ENCODE measurements at regions of chr3 and their contacts with region 1.

Region 1: DNA sequence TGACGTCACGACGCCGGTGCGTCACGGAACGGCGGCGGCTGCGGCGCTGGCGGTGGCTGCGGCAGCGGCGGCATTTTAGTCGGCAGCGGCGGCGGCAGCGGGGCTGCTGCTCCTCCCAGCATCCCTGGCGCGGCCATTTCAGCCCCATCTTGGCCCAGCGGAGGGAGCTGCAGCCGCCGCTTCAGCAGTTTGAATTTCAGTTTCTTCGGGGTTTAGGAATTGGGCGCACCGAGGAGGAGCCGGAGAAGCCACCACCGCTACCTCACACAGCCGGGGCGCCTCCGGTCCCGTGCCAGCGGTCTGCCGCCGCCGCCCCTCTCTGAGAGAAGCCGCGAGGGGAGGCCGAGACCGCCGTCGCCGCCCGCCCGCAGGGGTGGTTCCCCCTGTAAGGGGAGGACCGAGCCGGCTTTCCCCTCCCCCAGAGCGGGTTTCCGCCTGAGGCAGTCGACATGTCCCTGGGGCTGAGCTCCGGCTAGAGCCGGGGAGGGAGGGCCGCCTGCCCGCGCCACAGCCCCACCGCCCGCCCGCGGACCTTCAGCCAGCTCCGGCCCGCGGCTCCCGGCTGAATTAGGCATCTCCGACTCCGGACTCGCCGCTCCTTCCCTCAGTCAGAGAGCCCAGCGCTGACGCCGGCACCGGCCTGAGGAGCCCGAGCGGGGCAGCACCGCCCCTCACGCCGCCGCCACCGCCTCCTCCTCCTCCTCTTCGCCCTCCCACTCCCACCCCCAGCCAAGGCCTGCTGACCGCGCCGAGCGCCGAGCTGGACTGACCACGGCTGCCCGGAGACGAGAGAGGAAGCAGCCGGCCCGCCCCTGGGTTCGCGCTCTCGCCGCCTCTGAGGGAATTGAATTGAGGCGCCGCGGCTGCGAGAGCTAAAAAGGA is at the start of gene TSC22D2:
- DNase-seq: peak; percentile 92 to 99 (median 98)

Region 2: DNA sequence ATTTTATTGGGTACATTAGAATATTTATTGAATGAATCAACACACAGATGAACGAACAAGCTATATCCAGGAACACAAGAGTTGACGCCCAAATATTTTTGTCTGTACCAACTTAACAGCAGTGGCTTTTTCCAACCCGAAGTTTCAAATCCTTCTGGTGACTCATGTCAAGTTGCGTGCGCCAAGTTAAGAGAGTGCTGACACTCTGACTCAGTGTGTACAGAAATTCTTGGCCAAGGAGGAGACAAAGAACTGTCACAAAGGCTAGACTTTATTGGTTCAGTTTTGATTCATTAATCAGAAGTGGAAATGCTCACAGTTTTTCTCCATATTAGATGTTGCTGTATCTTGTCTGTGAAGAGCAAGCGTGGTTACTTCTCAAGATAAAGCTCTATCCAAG is 60.0 kb before region 1 on chr3:
- intact Hi-C with region 1: no loop called
- DNase-seq: peak in 8 of 42 donors; percentile 14 to 76 (median 37)

Region 3: DNA sequence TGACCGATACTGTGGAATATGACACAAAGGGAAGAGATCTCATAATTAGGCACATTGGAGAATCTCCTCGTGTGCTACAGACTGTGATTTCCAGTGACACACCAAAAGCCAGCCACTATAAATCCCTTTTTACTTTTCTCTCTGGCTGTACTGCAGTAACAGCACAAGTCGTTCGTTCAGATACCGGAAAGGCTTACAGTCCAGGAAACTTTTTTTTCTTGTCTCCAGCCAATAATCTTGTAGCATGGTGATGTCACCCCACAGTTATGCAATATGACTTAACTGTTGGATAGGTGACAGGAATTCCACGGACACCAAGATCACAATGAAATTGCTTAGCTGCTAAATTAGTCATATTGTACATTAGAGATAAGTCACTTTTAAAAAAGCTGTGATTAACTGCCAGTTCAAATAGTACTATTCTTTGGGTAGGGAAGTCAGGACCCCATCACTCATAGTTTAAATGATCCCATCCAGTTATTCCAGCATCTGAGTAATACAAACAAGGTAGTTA is 36.7 kb before region 1 on chr3:
- intact Hi-C with region 1: no loop called
- DNase-seq: peak in 4 of 42 donors; percentile 8 to 40 (median 16)

Region 4: GRCh38 chr3:150495563-150496168 is 87.2 kb after region 1 on chr3:
- intact Hi-C with region 1: loop called (anchors 5 kb)
- DNase-seq: peak in 8 of 42 donors; percentile 13 to 73 (median 38)

Region 5: DNA sequence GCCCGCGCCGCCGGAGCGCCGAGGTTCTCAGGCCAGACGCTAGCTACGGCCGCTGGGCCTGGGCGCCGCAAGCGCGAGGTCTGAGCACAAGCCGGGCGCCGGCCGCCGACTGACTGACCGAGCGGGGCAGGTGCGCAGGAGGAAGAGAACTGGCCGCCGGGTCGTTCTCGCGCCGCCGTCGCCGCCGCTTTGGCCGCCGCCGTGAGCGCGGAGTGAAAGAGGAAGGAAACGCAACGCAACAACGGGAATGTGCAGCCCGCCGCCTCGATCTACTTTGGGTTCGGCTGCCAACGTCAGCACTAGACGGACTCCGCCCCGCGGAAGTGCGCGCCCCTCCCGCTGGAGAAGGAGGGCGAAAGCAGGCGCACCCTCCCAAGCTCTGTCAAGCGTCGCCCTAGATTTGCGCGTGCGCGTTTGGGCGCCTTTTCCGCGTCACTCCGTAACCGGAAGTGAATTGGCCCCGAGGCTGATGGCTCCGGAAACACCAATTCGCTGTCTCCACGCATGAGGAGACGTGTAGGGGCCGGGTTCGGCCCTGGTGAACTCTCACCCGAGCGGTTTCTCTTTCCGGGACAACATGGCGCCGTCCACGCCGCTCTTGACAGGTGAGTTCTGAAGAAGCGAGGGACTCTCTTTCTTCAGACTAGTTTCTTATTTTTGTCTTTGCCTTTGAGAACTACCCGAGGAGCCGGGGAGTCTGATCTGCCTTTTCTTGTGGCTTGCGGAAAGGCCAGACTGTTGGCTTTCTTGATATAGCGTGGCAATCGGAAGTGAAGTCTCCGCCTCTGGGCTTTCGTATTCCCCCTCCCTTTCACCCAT is 138.0 kb after region 1 on chr3 and contains the starts of genes EIF2A and SERP1:
- intact Hi-C with region 1: loop called (anchors 5 kb)
- DNase-seq: peak; percentile 97 to 100 (median 99)

Region 6: DNA sequence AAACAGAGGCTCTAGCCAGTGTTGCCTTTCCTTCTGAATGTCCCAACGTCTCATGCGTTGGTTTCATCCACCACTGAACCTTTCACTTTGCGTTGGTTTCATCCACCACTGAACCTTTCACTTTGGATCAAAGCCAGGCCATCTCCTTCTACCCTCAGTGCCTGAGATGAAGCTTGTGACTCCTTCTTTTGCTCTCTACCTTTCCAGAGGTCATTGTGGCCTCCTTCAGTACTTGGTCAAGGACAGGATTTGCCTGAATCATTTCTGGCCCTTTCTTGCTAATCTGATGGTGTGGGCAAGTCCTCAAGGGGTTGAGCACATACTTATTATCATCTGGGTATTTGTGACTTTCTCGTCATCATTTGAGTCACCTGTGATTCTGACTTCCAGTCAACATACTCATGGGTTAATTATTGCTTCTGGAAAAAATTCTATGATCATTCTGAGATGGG is 244.7 kb after region 1 on chr3:
- intact Hi-C with region 1: no loop called
- DNase-seq: no peak

Measured in head of caudate nucleus (tissue), 42 donors.